Activated CD8-positive, alpha-beta T cell treated with anti-CD3 and anti-CD28 coated beads for 36 hours (primary cell): ENCODE measurements at regions of chr2 and their contacts with region 1.

Region 1: GRCh38 chr2:202657876-202658275 is 23.1 kb downstream of the FAM117B start:
- DNase-seq: no peak
- ATAC-seq: no peak
- H3K4me3 Mint-ChIP-seq: no peak overlapping the region
- H3K27ac Mint-ChIP-seq: peak overlapping the region; percentile 77
- H3K4me1 Mint-ChIP-seq: peaks cover 81% of the 10 kb centered on the region
- H3K27me3 Mint-ChIP-seq: no peaks in the 10 kb centered on the region
- CTCF ChIP-seq: no peak

Region 2: GRCh38 chr2:202643012-202643858 is 14.6 kb before region 1 on chr2:
- CTCF ChIA-PET with region 1: interaction called, 11 read pairs
- POLR2A ChIA-PET with region 1: interaction called, 5 read pairs
- intact Hi-C with region 1: no loop called
- DNase-seq: no peak
- ATAC-seq: peak; percentile 56
- H3K4me3 Mint-ChIP-seq: peak overlapping the region; percentile 64
- H3K27ac Mint-ChIP-seq: no peak overlapping the region
- H3K4me1 Mint-ChIP-seq: peaks cover 46% of the 10 kb centered on the region
- H3K27me3 Mint-ChIP-seq: no peaks in the 10 kb centered on the region
- CTCF ChIP-seq: no peak